ENCODE measurements at regions of chr20 and their contacts with region 1.

Region 1: GRCh38 chr20:58309575-58310290 is at the start of gene RAB22A:
- DNase-seq: peak; percentile 93
- ATAC-seq: peak; percentile 28
- H3K4me3 Mint-ChIP-seq: peak within 1 kb of the TSS; percentile 89
- H3K27ac Mint-ChIP-seq: peak within 1 kb of the TSS; percentile 90
- H3K4me1 Mint-ChIP-seq: peaks cover 70% of the 10 kb centered on the region
- H3K27me3 Mint-ChIP-seq: no peaks in the 10 kb centered on the region
- total RNA-seq, gene RAB22A: 9.3 TPM

Region 2: DNA sequence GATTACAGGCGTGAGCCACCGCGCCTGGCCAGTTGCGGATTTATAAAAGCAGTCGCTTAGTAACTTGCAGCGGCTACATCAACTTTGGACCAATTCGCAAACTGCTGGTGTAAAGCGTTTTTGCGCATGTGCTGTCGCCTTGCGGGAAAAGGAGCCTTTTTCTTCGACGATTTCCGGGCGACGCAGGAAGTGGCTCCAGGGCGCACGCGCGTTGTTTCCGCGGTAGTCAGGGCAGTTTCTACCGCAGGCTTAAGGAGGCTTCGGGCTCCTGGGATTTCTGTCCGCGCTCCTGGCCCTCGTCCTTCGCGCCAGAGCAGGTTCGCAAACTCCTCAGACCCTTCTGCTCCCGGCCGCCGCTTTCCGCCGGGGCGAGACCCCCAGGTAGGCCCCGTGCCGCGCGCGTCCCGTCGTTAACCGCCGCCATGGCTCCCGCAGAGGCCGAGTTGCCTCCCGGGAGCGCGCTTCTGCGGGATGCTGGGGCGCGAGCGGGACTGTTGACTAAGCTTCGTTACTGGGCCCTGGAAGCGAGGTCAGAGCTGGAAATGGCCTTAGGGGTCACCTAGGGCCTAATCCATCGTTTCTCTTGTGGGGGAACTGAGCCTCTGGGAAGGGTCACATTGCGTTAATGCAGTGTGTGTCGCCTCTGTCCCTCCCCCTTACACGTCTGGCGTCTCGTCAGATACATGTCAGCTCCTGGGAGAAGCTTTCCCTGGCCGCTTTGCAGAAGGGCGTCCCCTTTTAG is 958.5 kb before region 1 on chr20 and contains the start of gene RAE1:
- CTCF ChIA-PET with region 1: no interaction called
- POLR2A ChIA-PET with region 1: no interaction called
- intact Hi-C with region 1: loop called in 1 of 2 experiments (anchors 2 kb)
- DNase-seq: peak; percentile 94
- ATAC-seq: peak; percentile 84
- H3K4me3 Mint-ChIP-seq: peak within 1 kb of the TSS; percentile 96
- H3K27ac Mint-ChIP-seq: peak within 1 kb of the TSS; percentile 89
- H3K4me1 Mint-ChIP-seq: peaks cover 37% of the 10 kb centered on the region
- H3K27me3 Mint-ChIP-seq: no peaks in the 10 kb centered on the region
- total RNA-seq, gene RAE1: 42.7 to 48.9 TPM

Region 3: DNA sequence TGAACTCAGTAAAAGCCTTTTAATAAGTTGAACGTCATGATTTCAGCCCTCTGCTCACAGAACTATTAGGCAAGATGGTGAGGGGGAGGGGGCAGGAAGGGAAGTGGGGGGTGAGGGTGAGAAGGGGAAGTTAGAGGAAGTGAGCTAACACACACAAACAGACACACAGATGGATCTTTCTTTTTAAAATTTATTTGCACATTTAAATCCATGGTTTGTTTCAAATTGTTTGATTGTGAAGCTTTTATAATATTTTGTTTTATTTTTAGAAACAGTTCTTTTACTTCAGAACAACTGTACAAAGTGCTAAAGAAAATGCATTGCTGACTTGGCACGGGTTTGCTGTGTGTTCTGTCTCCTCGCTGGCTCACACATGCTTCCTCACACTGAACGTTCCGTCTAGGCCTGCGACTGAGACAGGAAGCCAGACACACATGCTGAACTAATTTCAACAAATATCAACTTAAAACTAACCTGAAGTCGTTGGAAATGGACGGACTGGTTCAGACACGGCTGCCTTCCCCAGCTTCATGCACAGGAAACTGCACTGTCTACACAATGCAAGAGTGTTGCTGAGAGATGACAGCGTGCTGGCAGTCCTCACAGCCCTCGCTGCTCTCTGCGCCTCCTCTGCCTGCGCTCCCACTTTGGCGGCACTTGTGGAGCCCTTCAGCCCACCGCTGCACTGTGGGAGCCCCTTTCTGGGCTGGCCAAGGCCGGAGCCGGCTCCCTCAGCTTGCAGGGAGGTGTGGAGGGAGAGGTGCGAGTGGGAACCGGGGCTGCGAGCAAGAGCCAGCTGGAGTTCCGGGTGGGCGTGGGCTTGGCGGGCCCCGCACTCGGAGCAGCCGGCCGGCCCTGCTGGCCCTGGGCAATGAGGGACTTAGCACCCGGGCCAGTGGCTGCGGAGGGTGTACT is 681.4 kb before region 1 on chr20:
- CTCF ChIA-PET with region 1: no interaction called
- POLR2A ChIA-PET with region 1: no interaction called
- intact Hi-C with region 1: loop called in 1 of 2 experiments (anchors 2 kb)
- DNase-seq: peak; percentile 72
- ATAC-seq: peak; percentile 65
- H3K4me3 Mint-ChIP-seq: peak overlapping the region; percentile 76
- H3K27ac Mint-ChIP-seq: peak overlapping the region; percentile 98
- H3K4me1 Mint-ChIP-seq: peaks cover 37% of the 10 kb centered on the region
- H3K27me3 Mint-ChIP-seq: no peaks in the 10 kb centered on the region

Region 4: DNA sequence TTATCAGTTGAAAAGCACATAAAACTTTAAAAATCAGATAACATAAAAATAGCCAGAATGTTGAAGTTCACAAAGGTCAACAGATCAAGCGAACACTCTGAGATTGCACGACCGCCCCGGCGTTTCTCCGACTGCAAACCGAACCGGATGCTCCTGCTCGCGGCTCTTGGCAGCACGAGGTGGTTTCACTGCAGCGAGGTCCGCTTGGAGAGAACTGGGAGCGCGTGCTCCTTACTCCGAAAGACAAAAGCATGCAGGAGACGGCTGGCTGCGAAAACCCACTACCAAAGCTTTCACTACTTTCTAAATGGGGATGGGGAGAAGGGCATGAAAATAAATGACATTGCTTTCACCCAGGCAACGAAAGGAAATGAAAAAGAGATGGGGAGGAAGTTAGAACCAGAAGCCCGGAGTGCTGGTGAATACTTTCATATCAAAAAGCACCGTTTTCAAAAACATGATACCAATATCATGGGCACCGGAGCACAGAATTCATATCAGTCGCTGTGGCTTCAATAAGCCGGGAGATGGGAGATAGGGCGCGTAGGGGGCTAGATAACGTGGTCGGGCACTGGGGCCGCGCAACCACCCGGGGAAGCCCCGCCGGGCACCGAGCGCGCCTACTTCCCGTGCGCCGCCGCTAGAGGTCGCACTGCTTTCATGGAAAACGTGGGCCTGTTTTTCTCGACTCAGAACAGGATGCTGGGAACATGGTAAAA is 73.0 kb before region 1 on chr20:
- CTCF ChIA-PET with region 1: interaction called, 14 read pairs
- POLR2A ChIA-PET with region 1: interaction called, 3 read pairs
- intact Hi-C with region 1: loop called (anchors 1 kb)
- DNase-seq: peak; percentile 93
- ATAC-seq: peak; percentile 90
- H3K4me3 Mint-ChIP-seq: peak overlapping the region; percentile 81
- H3K27ac Mint-ChIP-seq: peak overlapping the region; percentile 92
- H3K4me1 Mint-ChIP-seq: peaks cover 32% of the 10 kb centered on the region
- H3K27me3 Mint-ChIP-seq: no peaks in the 10 kb centered on the region

Region 5: DNA sequence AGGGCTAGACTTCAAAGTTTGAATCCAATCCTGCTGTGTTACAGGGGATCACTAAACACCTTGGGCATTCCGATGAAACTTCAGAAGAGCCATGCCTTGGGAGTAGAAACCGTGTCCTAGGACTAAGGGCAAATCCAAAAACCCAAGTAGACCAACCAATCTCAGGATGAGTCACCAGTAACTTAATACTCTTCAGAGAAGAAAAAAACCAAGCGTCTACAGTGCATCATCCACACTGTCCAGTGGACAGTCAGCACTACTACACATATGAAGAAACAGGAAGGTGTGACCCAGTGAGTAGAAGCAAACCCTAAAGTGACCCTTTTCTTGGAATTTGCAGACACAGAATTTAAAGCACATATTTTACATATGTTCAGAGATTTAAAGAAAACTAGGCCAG is 39.9 kb after region 1 on chr20:
- CTCF ChIA-PET with region 1: interaction called, 4 read pairs
- POLR2A ChIA-PET with region 1: interaction called, 6 read pairs
- intact Hi-C with region 1: loop called in 1 of 2 experiments (anchors 5 kb)
- DNase-seq: no peak
- ATAC-seq: no peak
- H3K4me3 Mint-ChIP-seq: no peak overlapping the region
- H3K27ac Mint-ChIP-seq: peak overlapping the region; percentile 0
- H3K4me1 Mint-ChIP-seq: peaks cover 9% of the 10 kb centered on the region
- H3K27me3 Mint-ChIP-seq: no peaks in the 10 kb centered on the region

Region 6: GRCh38 chr20:58650776-58651558 is 341.2 kb after region 1 on chr20 and contains the start of gene STX16:
- CTCF ChIA-PET with region 1: no interaction called
- POLR2A ChIA-PET with region 1: no interaction called
- intact Hi-C with region 1: loop called (anchors 1 to 2 kb)
- DNase-seq: peak; percentile 95
- ATAC-seq: peak; percentile 84
- H3K4me3 Mint-ChIP-seq: peak within 1 kb of the TSS; percentile 100
- H3K27ac Mint-ChIP-seq: peak within 1 kb of the TSS; percentile 100
- H3K4me1 Mint-ChIP-seq: peaks cover 19% of the 10 kb centered on the region
- H3K27me3 Mint-ChIP-seq: no peaks in the 10 kb centered on the region
- total RNA-seq, gene STX16: 101 to 110 TPM

Region 7: DNA sequence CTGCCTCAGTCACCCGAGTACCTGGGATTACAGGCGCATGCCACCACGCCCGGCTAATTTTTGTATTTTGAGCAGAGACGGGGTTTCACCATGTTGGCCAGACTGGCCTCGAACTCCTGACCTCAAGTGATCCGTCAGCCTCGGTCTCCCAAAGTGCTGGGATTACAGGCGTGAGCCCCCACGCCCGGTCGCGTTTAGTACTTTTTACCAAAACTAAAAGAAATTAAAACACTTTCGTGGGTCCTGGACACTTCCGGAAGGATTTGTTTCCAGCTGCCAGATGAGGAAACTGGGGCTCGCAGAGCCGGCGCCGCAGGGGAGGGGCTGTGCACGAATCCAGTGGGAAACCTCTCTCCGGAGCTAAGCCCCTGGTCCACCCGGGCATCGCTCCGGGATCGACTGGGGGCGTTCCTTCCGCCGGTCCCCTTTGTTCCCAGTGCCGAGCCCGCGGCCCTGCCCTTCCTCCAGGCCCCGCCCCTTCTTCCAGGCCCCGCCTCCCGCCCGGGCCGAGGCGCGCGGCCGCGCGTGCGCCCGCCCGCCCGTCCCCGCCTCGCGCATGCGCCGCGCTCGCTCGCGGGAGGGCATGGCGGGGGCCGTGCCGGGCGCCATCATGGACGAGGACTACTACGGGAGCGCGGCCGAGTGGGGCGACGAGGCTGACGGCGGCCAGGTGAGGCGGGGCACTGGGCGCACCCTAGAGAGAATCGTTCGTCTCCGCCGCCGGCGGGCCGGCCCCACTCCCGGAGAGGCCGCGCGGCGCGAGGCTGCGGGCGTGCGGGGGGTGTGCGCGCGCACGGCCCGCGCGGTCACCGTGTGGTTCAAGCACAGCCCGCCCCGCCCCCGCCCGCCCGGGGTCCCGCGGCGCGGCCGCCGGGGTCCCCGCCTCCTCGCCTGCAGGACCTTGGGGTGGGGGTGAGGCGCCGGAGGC is 671.2 kb after region 1 on chr20 and contains the start of gene NELFCD:
- CTCF ChIA-PET with region 1: no interaction called
- POLR2A ChIA-PET with region 1: no interaction called
- intact Hi-C with region 1: loop called in 1 of 2 experiments (anchors 1 kb)
- DNase-seq: peak; percentile 94
- ATAC-seq: peak; percentile 87
- H3K4me3 Mint-ChIP-seq: peak within 1 kb of the TSS; percentile 85
- H3K27ac Mint-ChIP-seq: peak within 1 kb of the TSS; percentile 89
- H3K4me1 Mint-ChIP-seq: peaks cover 32% of the 10 kb centered on the region
- H3K27me3 Mint-ChIP-seq: no peaks in the 10 kb centered on the region
- total RNA-seq, gene NELFCD: 111 to 121 TPM

Measured in activated CD4-positive, alpha-beta T cell treated with anti-CD3 and anti-CD28 coated beads for 36 hours (primary cell).